Activated naive CD4-positive, alpha-beta T cell treated with anti-CD3 and anti-CD28 coated beads for 36 hours (primary cell): ENCODE measurements at regions of chrX and their contacts with region 1.

Region 1: DNA sequence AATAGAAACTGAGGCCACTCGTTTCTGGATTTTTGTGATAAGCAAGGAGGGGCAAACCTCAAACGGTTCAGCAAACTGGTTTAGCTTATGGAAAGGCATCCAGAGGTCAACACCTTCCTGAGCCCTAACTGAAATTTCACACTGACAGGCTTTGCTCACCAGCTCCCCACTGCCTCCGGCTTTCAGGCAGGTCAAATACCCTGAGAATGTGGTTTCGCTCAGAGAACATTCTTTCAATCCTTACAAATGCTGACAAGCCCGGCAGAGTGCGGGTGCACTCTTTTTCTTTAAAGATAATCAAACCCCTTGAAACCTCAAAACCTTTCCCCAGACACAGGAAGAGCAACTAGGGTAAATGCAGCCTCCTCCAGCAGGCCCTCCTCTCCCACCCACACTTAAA is 41.5 kb downstream of the CD40LG start:
- DNase-seq: peak; percentile 15
- H3K4me3 Mint-ChIP-seq: peak overlapping the region; percentile 42
- H3K27ac Mint-ChIP-seq: peak overlapping the region; percentile 82
- H3K4me1 Mint-ChIP-seq: peaks cover 64% of the 10 kb centered on the region
- H3K27me3 Mint-ChIP-seq: no peaks in the 10 kb centered on the region

Region 2: DNA sequence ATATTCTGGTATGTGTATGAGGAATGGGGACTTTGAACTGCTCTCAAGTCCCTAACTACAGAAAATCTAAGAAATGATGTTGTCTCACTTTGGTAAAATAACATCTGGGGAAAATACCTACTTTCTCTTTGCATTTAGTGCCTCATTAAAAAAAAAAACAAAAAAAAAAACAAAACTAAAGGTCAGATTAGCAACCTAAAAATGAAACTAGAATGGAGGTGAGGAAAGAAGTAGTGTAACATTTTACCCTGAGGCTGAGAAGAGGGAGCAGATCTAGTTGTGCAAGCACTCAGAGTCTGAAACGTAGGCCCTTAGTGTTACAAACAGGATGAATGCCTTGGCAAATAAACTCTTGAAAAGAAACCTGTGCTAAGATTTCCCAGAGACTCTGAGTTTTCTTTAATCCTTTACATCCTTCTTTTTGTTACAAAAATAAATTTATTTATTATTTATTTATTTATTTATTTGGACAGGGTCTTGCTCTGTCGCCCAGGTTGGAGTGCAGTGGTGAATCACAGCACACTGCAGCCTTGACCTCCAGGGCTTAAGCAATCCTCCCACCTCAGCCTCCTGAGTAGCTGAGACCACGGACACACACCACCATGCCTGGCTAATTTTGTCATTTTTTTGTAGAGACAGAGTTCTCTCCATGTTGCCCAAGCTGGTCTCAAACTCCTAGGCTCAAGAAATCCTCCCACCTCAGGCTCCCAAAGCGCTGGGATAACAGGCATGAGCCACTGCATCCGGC is 101.2 kb before region 1 on chrX:
- CTCF ChIA-PET with region 1: interaction called, 4 read pairs
- intact Hi-C with region 1: loop called (anchors 1 kb)
- DNase-seq: peak; percentile 37
- H3K4me3 Mint-ChIP-seq: no peak overlapping the region
- H3K27ac Mint-ChIP-seq: peak overlapping the region; percentile 86
- H3K4me1 Mint-ChIP-seq: peaks cover 63% of the 10 kb centered on the region
- H3K27me3 Mint-ChIP-seq: no peaks in the 10 kb centered on the region

Region 3: DNA sequence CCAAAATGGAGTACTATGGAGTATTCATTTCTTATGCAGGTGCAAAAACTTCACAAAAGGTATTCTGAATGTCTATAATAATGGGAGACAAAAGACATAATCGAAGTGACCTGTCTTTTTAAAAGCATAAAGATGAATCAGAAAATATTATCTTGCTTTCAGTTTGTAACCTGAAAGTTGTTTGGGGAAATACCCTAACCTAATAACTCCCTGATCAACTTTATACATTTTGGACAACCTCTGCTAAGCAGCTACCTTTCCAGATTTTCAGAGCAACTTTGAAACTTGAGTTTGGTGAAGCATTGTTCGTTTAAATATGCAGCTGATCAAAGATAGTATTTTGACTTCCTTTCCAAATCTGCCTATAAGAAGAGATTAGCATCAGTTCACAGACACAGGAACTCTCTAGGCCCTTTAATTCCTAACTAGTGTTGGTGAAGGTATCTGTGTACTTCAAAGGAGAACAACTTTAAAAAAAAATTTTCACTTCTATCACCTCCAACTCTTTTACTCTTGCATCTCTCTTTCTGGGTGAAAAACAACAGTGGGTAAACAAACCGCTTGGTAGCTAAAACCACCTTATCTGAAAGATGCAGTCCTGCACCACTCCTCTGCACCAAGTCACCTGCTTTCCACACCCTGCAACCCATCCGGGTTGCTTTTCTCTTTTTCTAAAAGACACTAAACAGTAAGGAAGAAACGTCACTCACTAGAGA is 15.0 kb before region 1 on chrX:
- CTCF ChIA-PET with region 1: interaction called, 3 read pairs
- intact Hi-C with region 1: loop called (anchors 1 kb)
- DNase-seq: no peak
- H3K4me3 Mint-ChIP-seq: peak overlapping the region; percentile 21
- H3K27ac Mint-ChIP-seq: peak overlapping the region; percentile 82
- H3K4me1 Mint-ChIP-seq: peaks cover 91% of the 10 kb centered on the region
- H3K27me3 Mint-ChIP-seq: no peaks in the 10 kb centered on the region

Region 4: DNA sequence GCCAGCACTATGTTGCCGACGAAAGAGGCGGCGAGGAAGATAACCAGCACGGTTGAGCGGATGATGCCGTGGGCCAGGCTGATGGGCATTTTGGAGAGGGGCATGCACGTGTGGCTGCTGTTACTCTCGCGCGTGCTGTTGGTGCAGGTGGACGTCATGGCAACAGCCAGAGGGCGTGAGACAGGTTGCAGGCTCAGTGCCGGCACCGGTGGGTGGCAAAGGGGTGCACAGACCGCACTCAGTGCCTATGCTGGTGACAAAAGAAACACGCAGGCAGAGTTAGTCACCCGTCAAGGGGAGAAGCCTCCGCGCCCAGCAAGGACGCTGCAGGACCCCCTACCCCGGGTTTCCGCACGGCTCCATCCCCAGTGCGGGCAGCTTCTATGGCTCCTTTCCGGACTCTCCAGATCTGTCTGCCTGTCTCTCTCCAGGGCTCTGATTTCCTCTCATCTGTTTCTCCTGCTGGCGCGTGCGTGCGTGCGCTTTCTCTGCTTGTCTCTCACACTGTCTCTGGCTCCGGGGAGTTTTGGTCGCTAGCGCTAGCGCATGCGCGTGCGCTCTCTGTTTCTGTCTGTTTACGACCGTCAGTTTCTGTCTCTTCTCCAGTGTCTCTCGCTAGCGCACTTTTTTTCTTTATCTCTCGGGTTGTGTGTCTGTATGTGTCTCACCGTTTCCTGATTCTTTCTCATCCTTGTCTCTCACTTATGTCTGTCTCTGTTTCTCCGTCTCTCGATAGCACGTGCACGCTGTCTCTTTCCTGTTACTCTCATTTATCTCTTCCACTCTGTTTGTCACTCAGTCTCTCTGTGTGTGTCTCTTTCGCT is 342.3 kb after region 1 on chrX:
- CTCF ChIA-PET with region 1: no interaction called
- intact Hi-C with region 1: loop called (anchors 5 kb)
- DNase-seq: peak; percentile 62
- H3K4me3 Mint-ChIP-seq: no peak overlapping the region
- H3K27ac Mint-ChIP-seq: no peak overlapping the region
- H3K4me1 Mint-ChIP-seq: peaks cover 7% of the 10 kb centered on the region
- H3K27me3 Mint-ChIP-seq: peaks cover 42% of the 10 kb centered on the region